A673 (cell line): ENCODE measurements at regions of chr16 and their contacts with region 1.

Region 1: GRCh38 chr16:62665269-62665668 is 629.0 kb upstream of the CDH8 start:
- DNase-seq: peak; percentile 79
- H3K4me3 ChIP-seq: no peak overlapping the region
- H3K27ac ChIP-seq: no peak overlapping the region
- H3K4me1 ChIP-seq: no peaks in the 10 kb centered on the region
- H3K27me3 ChIP-seq: no peaks in the 10 kb centered on the region
- CTCF ChIP-seq: no peak

Region 2: GRCh38 chr16:62503073-62503472 is 162.2 kb before region 1 on chr16:
- CTCF ChIA-PET with region 1: no interaction called
- POLR2A ChIA-PET with region 1: no interaction called
- intact Hi-C with region 1: no loop called
- DNase-seq: no peak
- H3K4me3 ChIP-seq: no peak overlapping the region
- H3K27ac ChIP-seq: no peak overlapping the region
- H3K4me1 ChIP-seq: no peaks in the 10 kb centered on the region
- H3K27me3 ChIP-seq: no peaks in the 10 kb centered on the region
- CTCF ChIP-seq: no peak

Region 3: GRCh38 chr16:62711797-62712196 is 46.5 kb after region 1 on chr16:
- CTCF ChIA-PET with region 1: no interaction called
- POLR2A ChIA-PET with region 1: no interaction called
- intact Hi-C with region 1: loop called (anchors 1 kb)
- DNase-seq: peak; percentile 4
- H3K4me3 ChIP-seq: no peak overlapping the region
- H3K27ac ChIP-seq: no peak overlapping the region
- H3K4me1 ChIP-seq: no peaks in the 10 kb centered on the region
- H3K27me3 ChIP-seq: peaks cover 3% of the 10 kb centered on the region
- CTCF ChIP-seq: no peak